Aorta (tissue), 5 donors: ENCODE measurements at regions of chr4 and their contacts with region 1.

Region 1: GRCh38 chr4:162634390-162634789 is 470.6 kb upstream of the FSTL5 start:
- DNase-seq: no peak
- ATAC-seq: no peak
- H3K4me3 ChIP-seq: no peak overlapping the region
- H3K27ac ChIP-seq: no peak overlapping the region
- H3K4me1 ChIP-seq: no peaks in the 10 kb centered on the region
- H3K27me3 ChIP-seq: no peaks in the 10 kb centered on the region

Region 2: DNA sequence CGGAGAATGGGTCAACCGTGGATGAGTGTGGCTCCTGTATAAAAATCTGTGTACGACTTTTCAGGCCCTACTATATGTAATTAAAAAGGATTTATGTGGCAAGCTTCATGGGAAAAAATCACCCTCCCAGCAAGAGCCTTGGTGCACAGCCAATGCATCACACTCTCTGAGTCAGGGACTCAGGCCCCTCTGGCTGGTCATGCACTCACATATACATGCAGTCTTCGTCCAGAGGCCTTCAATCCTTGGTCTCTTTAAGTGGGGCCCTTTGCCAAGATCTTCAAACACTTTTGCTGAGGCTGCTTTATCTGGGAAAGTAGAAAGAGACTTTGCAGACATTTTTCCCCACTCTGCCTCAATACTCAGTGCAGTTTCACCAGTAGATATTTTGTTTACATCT is 159.1 kb before region 1 on chr4:
- intact Hi-C with region 1: no loop called
- DNase-seq: no peak
- ATAC-seq: no peak
- H3K4me3 ChIP-seq: no peak overlapping the region
- H3K27ac ChIP-seq: no peak overlapping the region
- H3K4me1 ChIP-seq: no peaks in the 10 kb centered on the region
- H3K27me3 ChIP-seq: no peaks in the 10 kb centered on the region

Region 3: DNA sequence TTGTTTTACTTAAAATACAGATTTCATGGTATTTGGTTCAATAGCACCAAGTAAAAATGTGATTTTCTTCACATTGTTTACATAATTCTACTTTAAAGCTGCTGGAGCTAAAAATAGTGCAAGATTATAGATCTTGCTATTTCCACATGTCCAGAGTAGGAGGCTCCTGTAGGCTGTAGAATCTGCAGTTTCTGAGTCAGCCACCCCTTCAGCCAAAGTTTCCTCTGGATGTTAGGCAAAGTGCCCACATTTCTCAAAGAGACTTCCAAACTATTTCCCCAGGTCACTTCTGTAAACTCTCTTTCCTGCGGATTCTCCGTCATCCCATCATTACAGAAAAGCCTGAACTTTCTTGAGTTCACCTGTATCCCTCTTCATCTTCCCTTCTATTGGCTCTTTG is 128.1 kb before region 1 on chr4:
- intact Hi-C with region 1: loop called in 1 of 2 experiments (anchors 10 kb)
- DNase-seq: no peak
- ATAC-seq: no peak
- H3K4me3 ChIP-seq: no peak overlapping the region
- H3K27ac ChIP-seq: no peak overlapping the region
- H3K4me1 ChIP-seq: no peaks in the 10 kb centered on the region
- H3K27me3 ChIP-seq: no peaks in the 10 kb centered on the region

Region 4: DNA sequence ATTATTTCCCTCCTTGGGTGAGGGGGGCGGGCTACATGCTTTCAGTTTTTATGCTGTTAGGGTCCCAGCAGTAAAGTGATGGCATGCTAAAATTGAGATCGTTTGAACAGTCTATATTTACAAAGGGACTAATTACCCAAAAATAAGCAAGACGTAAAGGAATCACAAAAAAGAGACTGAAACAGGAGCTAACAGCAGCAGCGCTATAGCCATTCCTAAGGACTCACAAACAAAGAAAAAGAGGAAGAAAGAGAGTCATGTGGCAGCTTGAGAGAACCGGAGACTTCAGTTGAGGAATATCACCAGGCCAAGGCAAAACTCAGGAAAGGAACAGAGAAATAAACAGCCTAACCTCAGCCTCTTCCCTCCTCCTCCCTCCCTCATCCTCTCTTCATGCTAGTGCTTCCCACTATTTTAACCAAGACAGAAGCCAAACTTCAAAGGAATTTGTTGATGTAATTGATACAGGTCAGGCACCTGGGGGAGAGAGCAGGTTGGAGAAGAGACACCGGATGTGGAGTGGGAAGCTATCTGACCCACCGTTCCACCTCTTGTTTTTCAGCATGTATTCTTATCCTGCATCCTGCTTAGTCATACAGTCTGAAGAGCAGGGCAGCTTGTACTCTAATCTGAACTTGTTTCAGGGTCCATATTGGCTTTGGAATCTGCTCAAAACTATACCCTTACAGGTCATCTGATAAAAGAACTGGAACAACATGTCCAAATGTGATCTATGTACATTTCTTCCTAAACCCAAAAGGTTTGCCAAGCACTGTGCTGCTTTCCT is 148.6 kb after region 1 on chr4:
- intact Hi-C with region 1: no loop called
- DNase-seq: no peak
- ATAC-seq: no peak
- H3K4me3 ChIP-seq: no peak overlapping the region
- H3K27ac ChIP-seq: no peak overlapping the region
- H3K4me1 ChIP-seq: no peaks in the 10 kb centered on the region
- H3K27me3 ChIP-seq: no peaks in the 10 kb centered on the region